Activated CD8-positive, alpha-beta T cell treated with anti-CD3 and anti-CD28 coated beads, Interleukin-2, amount 10 ng/mL, durations not matched to agents 7 days and 5 days (primary cell): ENCODE measurements at regions of chr5 and their contacts with region 1.

Region 1: GRCh38 chr5:172179361-172179989 is 8.5 kb downstream of the STK10 start:
- DNase-seq: peak; percentile 70
- ATAC-seq: peak; percentile 18
- H3K4me3 Mint-ChIP-seq: peak overlapping the region; percentile 85
- H3K27ac Mint-ChIP-seq: peak overlapping the region; percentile 98
- H3K4me1 Mint-ChIP-seq: peaks cover 92% of the 10 kb centered on the region
- H3K27me3 Mint-ChIP-seq: no peaks in the 10 kb centered on the region

Region 2: DNA sequence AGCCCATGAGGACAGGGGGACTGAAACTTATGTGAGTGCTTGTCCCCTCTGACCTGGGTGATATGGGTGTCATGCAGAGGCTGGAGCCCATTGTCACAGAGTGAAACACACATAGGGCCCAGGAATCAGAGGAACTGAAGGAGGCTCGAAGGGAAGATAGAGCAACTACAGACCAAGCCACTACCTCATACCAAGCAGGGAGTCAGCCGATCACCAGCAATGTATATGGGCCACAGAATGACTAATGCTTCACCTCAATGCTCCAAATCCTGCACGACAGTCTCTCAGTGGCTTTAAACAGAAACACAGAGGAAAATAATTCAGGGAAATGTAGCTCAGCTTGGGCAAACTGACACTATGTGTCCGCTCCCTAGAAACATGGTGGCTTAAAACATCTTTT is 164.1 kb before region 1 on chr5:
- CTCF ChIA-PET with region 1: no interaction called
- POLR2A ChIA-PET with region 1: no interaction called
- DNase-seq: no peak
- ATAC-seq: peak; percentile 68
- H3K4me3 Mint-ChIP-seq: no peak overlapping the region
- H3K27ac Mint-ChIP-seq: peak overlapping the region; percentile 43
- H3K4me1 Mint-ChIP-seq: peaks cover 5% of the 10 kb centered on the region
- H3K27me3 Mint-ChIP-seq: no peaks in the 10 kb centered on the region

Region 3: GRCh38 chr5:172106511-172107356 is 72.7 kb before region 1 on chr5:
- CTCF ChIA-PET with region 1: interaction called, 34 read pairs
- POLR2A ChIA-PET with region 1: interaction called, 105 read pairs
- DNase-seq: peak; percentile 65
- ATAC-seq: no peak
- H3K4me3 Mint-ChIP-seq: peak overlapping the region; percentile 22
- H3K27ac Mint-ChIP-seq: peak overlapping the region; percentile 67
- H3K4me1 Mint-ChIP-seq: peaks cover 64% of the 10 kb centered on the region
- H3K27me3 Mint-ChIP-seq: no peaks in the 10 kb centered on the region

Region 4: DNA sequence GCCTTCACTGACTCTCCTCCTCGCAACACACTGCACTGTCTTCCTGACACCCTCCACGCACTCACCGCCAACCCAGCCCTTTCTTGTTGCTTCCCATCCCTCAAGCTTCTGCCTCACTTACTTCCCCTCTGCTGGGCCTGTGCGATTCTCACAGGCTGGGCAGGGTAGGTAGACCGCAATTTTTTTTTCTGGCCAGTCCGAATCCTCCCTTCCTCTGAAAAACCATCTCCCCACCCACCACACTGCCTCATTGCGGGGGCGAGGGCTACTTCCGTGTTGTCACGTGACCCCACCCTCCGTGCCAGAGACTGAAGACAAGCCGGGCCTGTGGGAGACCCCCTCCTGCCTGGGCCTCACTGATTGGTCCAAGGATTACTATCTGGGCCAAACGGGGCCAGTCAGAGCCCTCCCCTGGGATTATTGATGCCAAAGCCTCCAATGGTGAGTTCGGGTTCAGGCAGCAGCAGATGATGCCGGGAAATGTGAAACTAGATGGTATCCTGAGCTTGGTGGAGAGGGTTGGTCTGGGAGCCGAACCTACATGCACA is 64.5 kb before region 1 on chr5:
- CTCF ChIA-PET with region 1: interaction called, 34 read pairs
- POLR2A ChIA-PET with region 1: interaction called, 105 read pairs
- DNase-seq: peak; percentile 93
- ATAC-seq: peak; percentile 71
- H3K4me3 Mint-ChIP-seq: peak overlapping the region; percentile 71
- H3K27ac Mint-ChIP-seq: peak overlapping the region; percentile 97
- H3K4me1 Mint-ChIP-seq: peaks cover 86% of the 10 kb centered on the region
- H3K27me3 Mint-ChIP-seq: no peaks in the 10 kb centered on the region

Region 5: GRCh38 chr5:172156541-172156994 is 22.9 kb before region 1 on chr5:
- CTCF ChIA-PET with region 1: interaction called, 5 read pairs
- POLR2A ChIA-PET with region 1: interaction called, 21 read pairs
- DNase-seq: no peak
- ATAC-seq: no peak
- H3K4me3 Mint-ChIP-seq: no peak overlapping the region
- H3K27ac Mint-ChIP-seq: no peak overlapping the region
- H3K4me1 Mint-ChIP-seq: peaks cover 63% of the 10 kb centered on the region
- H3K27me3 Mint-ChIP-seq: no peaks in the 10 kb centered on the region

Region 6: DNA sequence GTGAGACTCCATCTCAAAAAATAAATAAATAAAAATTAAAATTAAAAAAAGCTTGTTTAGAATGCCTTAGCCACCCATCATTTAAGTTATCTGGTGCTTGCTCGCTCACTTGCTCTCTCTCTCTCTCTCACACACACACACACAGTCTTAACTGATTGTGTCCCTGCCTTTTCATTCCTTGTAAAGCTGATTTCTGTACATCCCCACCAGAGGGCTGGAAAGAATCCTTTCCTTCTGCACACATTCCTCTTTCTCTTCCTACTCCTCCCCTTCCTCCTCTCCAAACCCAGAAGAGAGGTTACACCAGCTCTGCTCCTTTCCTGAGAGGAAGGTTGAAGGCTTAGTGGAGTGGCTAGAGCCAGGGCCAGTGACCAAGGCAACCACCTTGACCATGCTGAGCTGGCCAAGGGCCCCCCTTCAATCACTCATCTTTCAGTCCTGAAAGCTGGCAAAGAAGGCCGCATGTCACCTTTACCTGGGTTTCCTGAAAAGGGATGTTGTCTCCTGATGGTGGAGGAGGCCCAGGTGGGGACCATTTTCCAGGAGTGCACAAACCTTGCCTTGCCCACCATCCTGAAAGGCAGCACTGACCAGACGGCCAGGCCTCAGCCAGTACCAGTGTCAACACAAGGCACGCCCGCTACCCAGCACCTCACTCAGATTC is 17.0 kb before region 1 on chr5:
- CTCF ChIA-PET with region 1: interaction called, 5 read pairs
- POLR2A ChIA-PET with region 1: interaction called, 25 read pairs
- DNase-seq: no peak
- ATAC-seq: no peak
- H3K4me3 Mint-ChIP-seq: no peak overlapping the region
- H3K27ac Mint-ChIP-seq: peak overlapping the region; percentile 41
- H3K4me1 Mint-ChIP-seq: peaks cover 61% of the 10 kb centered on the region
- H3K27me3 Mint-ChIP-seq: no peaks in the 10 kb centered on the region

Region 7: GRCh38 chr5:172283020-172283861 is 103.8 kb after region 1 on chr5 and contains the start of gene UBTD2:
- CTCF ChIA-PET with region 1: interaction called, 37 read pairs
- POLR2A ChIA-PET with region 1: no interaction called
- DNase-seq: peak; percentile 83
- ATAC-seq: peak; percentile 91
- H3K4me3 Mint-ChIP-seq: peak within 1 kb of the TSS; percentile 88
- H3K27ac Mint-ChIP-seq: peak within 1 kb of the TSS; percentile 76
- H3K4me1 Mint-ChIP-seq: peaks cover 22% of the 10 kb centered on the region
- H3K27me3 Mint-ChIP-seq: peaks cover 8% of the 10 kb centered on the region
- total RNA-seq, gene UBTD2: 12.0 to 12.8 TPM

Region 8: GRCh38 chr5:172361566-172362238 is 182.2 kb after region 1 on chr5:
- CTCF ChIA-PET with region 1: no interaction called
- POLR2A ChIA-PET with region 1: no interaction called
- DNase-seq: peak; percentile 25
- ATAC-seq: no peak
- H3K4me3 Mint-ChIP-seq: no peak overlapping the region
- H3K27ac Mint-ChIP-seq: no peak overlapping the region
- H3K4me1 Mint-ChIP-seq: peaks cover 20% of the 10 kb centered on the region
- H3K27me3 Mint-ChIP-seq: peaks cover 5% of the 10 kb centered on the region